Left cardiac atrium (tissue), 4 donors: ENCODE measurements at regions of chr6 and their contacts with region 1.

Region 1: DNA sequence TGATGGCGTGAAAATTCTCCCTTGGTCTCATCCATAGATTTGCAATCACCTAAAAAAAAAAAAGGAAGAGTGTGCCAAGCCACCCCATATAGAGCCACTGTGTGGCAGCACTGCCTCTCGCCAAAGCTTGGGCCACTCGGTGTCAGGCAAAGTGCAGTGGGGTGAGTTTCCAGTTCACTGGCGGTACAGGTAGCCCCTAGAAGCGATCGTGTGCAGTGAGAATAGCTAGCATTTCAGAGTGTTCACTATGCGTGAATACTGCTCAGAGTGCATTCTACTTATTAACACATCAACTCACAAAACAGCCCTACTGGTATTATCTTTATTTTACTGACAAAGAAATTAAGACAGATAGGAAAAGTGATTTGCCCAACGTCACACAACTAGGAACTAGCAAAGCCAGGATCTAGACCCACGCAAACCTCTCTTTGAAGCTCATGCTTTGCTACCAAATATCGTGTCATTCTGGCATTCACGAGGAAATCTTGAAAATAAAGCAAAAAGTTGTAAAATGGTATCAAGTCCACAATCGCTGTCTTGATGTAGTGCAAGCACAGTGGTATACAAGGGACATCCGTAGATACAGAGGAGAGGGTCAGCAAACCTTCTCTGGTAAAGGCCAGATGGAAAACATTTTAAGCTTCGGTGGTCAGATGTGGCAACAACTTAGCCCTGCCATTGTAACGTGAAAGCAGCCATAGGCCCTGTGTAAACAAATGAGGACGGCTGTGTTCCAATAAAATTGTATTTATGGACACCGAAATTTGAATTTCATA is 10.4 kb upstream of the GCNT2 start:
- DNase-seq: peak; percentile 62
- ATAC-seq: peak; percentile 95 to 96

Region 2: DNA sequence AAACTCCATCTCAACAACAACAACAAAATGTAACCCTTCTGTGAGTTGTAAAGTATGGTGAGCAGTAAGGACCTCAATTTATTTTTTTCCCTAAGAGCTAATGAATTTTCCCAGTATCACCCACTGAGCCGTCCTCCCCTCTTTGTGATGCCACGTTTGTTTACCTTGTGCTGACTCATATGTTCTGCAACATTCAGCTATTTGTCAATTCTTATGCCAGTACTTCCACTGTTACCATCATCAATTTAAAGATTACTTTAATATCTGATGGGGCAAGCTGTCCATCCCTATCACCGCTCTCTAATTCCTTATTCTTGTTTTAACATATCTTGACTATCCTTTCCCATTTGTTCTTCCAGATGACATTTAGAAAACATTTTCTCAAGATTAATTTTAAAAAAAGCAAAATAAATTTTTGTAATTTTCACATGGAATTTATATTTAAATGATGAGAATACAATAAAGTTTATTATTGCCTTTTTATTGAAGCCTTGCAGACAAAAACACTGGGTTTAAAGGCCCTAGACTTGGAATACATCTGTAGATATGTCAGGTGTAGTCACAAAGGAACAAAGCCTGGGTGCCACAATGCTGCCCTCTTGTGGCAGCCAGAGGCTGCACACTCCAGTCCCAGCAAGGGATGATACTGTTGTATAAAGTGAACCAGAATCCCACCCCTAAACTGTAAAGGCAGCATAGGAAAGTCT is 290.2 kb after region 1 on chr6:
- intact Hi-C with region 1: loop called in 1 of 2 experiments (anchors 10 kb)
- DNase-seq: peak; percentile 39
- ATAC-seq: peak; percentile 77 to 89